ENCODE measurements at regions of chr12 and their contacts with region 1.

Region 1: DNA sequence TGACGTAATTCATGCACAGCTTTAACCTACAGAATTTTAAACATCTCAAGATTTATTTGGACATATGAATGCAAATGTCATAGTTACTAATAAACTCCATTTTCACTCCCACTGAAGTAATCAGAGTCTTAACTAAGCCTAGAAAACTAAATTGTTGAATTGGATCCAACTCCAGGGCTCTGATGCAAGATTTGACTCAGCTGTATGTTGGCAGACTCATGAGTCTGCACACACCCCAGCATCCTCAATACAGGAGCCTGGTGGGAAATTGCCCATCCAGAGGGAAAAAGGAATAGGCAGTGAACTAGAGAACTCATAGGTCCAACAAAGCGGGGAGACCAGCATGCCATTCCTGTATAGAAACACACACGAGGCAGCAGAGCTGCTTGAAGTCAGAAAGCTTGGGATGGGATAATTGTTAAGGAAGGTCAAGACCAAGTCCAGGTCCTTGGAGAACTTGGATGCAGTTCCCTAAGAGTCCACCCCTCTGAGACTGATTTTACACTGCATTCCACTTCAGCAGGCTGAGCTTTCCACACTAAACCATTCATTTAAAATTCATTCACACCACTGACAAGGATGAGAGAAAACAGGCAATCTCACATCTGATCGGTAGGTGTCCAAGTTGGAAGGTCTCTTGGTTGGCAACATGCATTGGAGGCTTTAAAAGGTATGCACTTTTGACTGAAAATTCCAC is 14.4 kb downstream of the TMTC1 start:
- DNase-seq: peak; percentile 79
- H3K4me3 ChIP-seq: no peak overlapping the region
- H3K27ac ChIP-seq: peak overlapping the region; percentile 43
- H3K4me1 ChIP-seq: peaks cover 42% of the 10 kb centered on the region
- H3K27me3 ChIP-seq: no peaks in the 10 kb centered on the region
- CTCF ChIP-seq: peak; percentile 11 to 18

Region 2: GRCh38 chr12:29463198-29463597 is 306.1 kb before region 1 on chr12:
- CTCF ChIA-PET with region 1: no interaction called
- dilution Hi-C with region 1: no loop called
- in situ Hi-C with region 1: no loop called
- intact Hi-C with region 1: no loop called
- DNase-seq: no peak
- H3K4me3 ChIP-seq: no peak overlapping the region
- H3K27ac ChIP-seq: no peak overlapping the region
- H3K4me1 ChIP-seq: no peaks in the 10 kb centered on the region
- H3K27me3 ChIP-seq: no peaks in the 10 kb centered on the region
- CTCF ChIP-seq: no peak

Region 3: DNA sequence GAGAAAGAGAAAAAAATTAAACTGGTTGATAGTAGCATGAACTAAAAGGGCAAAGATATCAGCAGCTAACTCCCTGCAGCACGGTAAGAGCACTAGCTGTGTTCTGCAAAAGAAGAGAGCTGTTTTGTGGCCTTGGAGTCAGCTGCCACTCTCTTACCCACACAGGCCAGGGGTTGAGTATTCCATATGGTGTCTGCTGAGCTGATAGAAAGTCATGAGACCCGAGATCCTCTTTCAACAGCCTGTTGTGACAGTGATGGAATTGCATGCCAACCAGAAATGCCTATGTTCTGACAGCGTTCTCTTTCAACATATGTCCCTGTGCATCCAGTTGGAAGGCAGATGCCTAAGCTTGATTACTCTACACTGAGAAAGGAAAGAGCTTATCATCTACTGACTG is 25.5 kb before region 1 on chr12:
- CTCF ChIA-PET with region 1: no interaction called
- dilution Hi-C with region 1: no loop called
- in situ Hi-C with region 1: no loop called
- intact Hi-C with region 1: loop called (anchors 2 kb)
- DNase-seq: peak; percentile 79
- H3K4me3 ChIP-seq: no peak overlapping the region
- H3K27ac ChIP-seq: peak overlapping the region; percentile 94
- H3K4me1 ChIP-seq: peaks cover 47% of the 10 kb centered on the region
- H3K27me3 ChIP-seq: no peaks in the 10 kb centered on the region
- CTCF ChIP-seq: no peak

Measured in mammary epithelial cell (primary cell).